ENCODE measurements at regions of chr11 and their contacts with region 1.

Region 1: GRCh38 chr11:118889781-118890180 is 6.1 kb downstream of the CXCR5 start:
- DNase-seq: peak; percentile 85
- ATAC-seq: peak; percentile 85

Region 2: GRCh38 chr11:118435893-118436624 is 453.7 kb before region 1 on chr11 and contains the start of gene KMT2A:
- intact Hi-C with region 1: no loop called
- DNase-seq: peak; percentile 99
- ATAC-seq: peak; percentile 91
- total RNA-seq, gene KMT2A: 23.6 TPM

Region 3: GRCh38 chr11:118807800-118808778 is 81.7 kb before region 1 on chr11:
- intact Hi-C with region 1: loop called (anchors 5 kb)
- DNase-seq: no peak
- ATAC-seq: no peak

Measured in Right ventricle myocardium superior (tissue), 1 donor.